Testis (tissue), 5 donors: ENCODE measurements at regions of chr16 and their contacts with region 1.

Region 1: GRCh38 chr16:83967806-83968305 is at the start of gene NECAB2:
- DNase-seq: peak; percentile 46
- H3K4me3 ChIP-seq: peak within 1 kb of the TSS in 1 of 2 donors; percentile 31
- H3K27ac ChIP-seq: no peak within 1 kb of the TSS
- H3K4me1 ChIP-seq: no peaks in the 10 kb centered on the region
- H3K27me3 ChIP-seq: no peaks in the 10 kb centered on the region
- CTCF ChIP-seq: peak in 2 of 3 experiments; percentile 54 to 71
- POLR2A ChIP-seq: no peak
- total RNA-seq, gene NECAB2: 9.5 to 13.9 TPM

Region 2: GRCh38 chr16:83762141-83762991 is 205.5 kb before region 1 on chr16:
- intact Hi-C with region 1: no loop called
- DNase-seq: no peak
- H3K4me3 ChIP-seq: no peak overlapping the region
- H3K27ac ChIP-seq: no peak overlapping the region
- H3K4me1 ChIP-seq: no peaks in the 10 kb centered on the region
- H3K27me3 ChIP-seq: no peaks in the 10 kb centered on the region
- CTCF ChIP-seq: no peak
- POLR2A ChIP-seq: no peak

Region 3: DNA sequence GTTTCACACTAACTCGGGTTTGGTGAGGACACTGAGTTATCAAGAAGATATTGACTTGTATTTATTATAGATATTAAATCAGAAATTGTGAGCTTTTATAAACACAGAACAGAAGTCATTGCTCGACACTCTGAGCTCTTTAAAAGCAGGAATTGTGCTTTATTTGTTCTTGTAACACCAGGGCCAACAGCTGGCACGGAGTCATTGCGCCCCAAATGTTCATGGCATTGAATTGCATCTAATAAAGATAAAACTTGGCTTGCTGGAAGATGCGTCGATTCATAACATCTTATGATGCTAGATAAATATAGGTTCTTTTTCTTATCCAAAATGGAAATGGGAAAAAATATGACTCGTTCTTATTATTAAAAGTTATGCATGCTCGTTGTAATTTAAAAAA is 80.8 kb before region 1 on chr16:
- intact Hi-C with region 1: no loop called
- DNase-seq: peak; percentile 52
- H3K4me3 ChIP-seq: no peak overlapping the region
- H3K27ac ChIP-seq: no peak overlapping the region
- H3K4me1 ChIP-seq: peaks cover 9% of the 10 kb centered on the region
- H3K27me3 ChIP-seq: no peaks in the 10 kb centered on the region
- CTCF ChIP-seq: no peak
- POLR2A ChIP-seq: no peak

Region 4: GRCh38 chr16:83913245-83913633 is 54.6 kb before region 1 on chr16:
- intact Hi-C with region 1: no loop called
- DNase-seq: no peak
- H3K4me3 ChIP-seq: no peak overlapping the region
- H3K27ac ChIP-seq: no peak overlapping the region
- H3K4me1 ChIP-seq: no peaks in the 10 kb centered on the region
- H3K27me3 ChIP-seq: no peaks in the 10 kb centered on the region
- CTCF ChIP-seq: no peak
- POLR2A ChIP-seq: no peak

Region 5: GRCh38 chr16:84062734-84063640 is 95.1 kb after region 1 on chr16:
- intact Hi-C with region 1: loop called (anchors 5 kb)
- DNase-seq: peak; percentile 93
- H3K4me3 ChIP-seq: no peak overlapping the region
- H3K27ac ChIP-seq: no peak overlapping the region
- H3K4me1 ChIP-seq: peaks cover 15% of the 10 kb centered on the region
- H3K27me3 ChIP-seq: no peaks in the 10 kb centered on the region
- CTCF ChIP-seq: peak; percentile 88 to 89 (median 88)
- POLR2A ChIP-seq: no peak

Region 6: GRCh38 chr16:84186685-84187437 is 219.0 kb after region 1 on chr16 and contains the start of gene TAF1C:
- intact Hi-C with region 1: loop called (anchors 10 kb)
- DNase-seq: peak; percentile 97
- H3K4me3 ChIP-seq: peak within 1 kb of the TSS; percentile 81 to 98
- H3K27ac ChIP-seq: peak within 1 kb of the TSS; percentile 46 to 67
- H3K4me1 ChIP-seq: peaks cover 30% of the 10 kb centered on the region
- H3K27me3 ChIP-seq: no peaks in the 10 kb centered on the region
- CTCF ChIP-seq: peak; percentile 92 to 97 (median 94)
- POLR2A ChIP-seq: no peak
- total RNA-seq, gene TAF1C: 101 TPM

Region 7: GRCh38 chr16:84471316-84471715 is 503.5 kb after region 1 on chr16:
- intact Hi-C with region 1: no loop called
- DNase-seq: no peak
- H3K4me3 ChIP-seq: no peak overlapping the region
- H3K27ac ChIP-seq: no peak overlapping the region
- H3K4me1 ChIP-seq: no peaks in the 10 kb centered on the region
- H3K27me3 ChIP-seq: no peaks in the 10 kb centered on the region
- CTCF ChIP-seq: no peak
- POLR2A ChIP-seq: no peak